ENCODE measurements at regions of chr4 and their contacts with region 1.

Region 1: GRCh38 chr4:143335979-143336780 is 496 bp upstream of the GAB1 start:
- DNase-seq: peak; percentile 95

Region 2: DNA sequence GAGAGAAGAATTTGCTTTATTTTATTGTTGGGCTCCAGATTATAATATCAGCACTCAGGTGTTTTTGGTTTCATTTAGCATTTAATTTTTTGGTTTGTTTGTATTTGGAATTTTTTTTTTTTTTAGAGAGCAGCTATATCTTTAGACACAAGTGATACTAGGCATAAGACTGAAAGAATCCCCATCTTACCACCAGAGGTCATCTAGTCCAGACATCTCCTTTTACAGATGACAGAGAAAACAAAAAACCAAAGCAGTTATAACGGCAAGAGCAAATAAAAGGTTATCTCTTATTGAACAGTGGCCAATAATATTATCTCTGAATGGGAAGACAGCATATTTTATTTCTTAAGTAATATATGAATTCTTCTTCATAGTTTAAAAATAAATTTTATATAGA is 128.6 kb before region 1 on chr4:
- intact Hi-C with region 1: loop called (anchors 5 kb)
- DNase-seq: no peak

Region 3: DNA sequence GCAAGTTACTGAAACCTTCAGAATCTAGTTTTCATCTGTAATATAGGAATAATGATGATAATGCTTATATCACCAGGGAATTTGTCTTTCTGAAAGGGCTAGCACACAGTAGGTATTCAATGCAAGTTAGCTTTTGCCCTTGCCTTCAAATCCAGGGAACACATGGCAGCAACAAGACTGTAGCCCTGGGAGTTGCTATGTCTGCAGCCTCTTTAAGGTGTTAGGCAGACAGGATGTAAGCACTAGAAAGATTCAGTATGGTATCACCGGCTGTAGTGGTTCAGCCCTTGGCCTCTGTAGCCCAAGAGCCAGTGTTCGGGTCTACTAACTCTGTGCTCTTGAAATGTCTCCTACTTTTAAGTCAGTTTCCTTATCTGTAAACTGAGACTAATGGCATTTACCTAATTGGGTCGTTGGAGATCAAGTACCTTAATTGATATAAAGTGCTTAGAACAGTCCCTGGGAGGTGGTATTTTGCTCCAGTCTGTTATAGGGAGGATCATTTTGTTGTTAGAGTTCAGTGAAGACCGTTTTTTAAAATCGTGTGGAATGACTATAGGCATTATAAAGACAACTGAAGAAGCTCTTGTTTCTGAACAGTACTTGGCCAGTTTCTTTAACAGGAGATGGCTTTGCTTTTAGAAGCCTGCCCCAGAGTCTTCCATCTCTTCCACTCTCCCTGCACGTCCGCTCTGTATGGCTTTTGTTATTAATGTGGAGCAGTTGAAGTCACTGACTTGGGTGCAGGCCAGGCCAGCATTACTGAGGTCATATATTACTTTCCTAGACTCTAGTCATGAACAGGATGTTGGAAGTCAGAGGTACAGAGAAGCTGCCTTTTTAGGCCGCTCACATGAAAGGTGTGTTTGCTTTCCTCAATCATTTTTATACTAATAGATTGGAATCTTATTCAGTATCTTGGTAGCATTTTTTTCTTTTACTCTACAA is 45.3 kb after region 1 on chr4:
- intact Hi-C with region 1: loop called (anchors 2 kb)
- DNase-seq: peak; percentile 88

Region 4: GRCh38 chr4:143482840-143483239 is 146.7 kb after region 1 on chr4:
- intact Hi-C with region 1: loop called (anchors 5 kb)
- DNase-seq: no peak

Measured in cardiac septum (tissue), 1 donor.